ENCODE measurements at regions of chr10 and their contacts with region 1.

Region 1: DNA sequence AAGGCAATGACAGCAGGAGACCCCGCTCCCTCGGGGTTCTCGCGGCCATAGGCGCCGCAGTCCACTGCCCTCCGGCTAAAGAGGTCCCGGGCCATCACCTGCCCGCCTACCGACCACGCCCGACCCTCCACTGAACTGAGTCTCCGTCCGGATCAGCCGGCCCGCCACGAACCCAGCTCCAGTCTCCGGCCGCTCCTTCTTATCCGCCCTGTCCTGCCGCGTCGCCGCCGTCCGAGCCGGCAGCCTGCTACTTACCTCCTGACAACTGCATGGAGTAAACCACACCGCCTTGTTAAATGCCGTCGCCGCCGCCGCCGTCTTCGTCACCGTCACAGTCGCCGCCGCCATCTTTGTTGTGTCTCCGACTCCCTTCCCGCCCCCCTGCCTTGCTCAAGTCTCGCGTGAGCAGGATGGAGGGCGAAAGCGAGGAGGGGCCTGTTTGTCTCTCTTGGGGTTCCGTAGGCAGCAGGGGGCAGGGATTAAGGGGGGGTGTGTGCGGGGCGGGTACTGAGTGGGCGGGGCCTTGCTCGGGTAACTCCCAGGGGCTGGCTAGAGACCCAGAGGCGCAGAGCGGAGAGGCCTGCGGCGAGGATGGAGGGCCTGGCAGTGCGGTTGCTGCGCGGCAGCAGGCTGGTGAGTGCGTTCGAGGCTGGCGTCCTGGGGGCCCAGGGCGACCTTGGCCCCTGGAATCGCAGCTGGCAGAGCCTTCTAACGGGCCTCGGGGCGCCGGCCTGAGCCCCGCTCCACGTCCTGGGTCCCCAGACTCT is at the starts of genes ACADSB and IKZF5:
- DNase-seq: peak; percentile 97
- H3K4me3 ChIP-seq: peak within 1 kb of the TSS; percentile 80 to 93 (median 82)
- H3K27ac ChIP-seq: peak within 1 kb of the TSS; percentile 63
- H3K4me1 ChIP-seq: peaks cover 21% of the 10 kb centered on the region
- H3K27me3 ChIP-seq: no peaks in the 10 kb centered on the region
- CTCF ChIP-seq: no peak
- POLR2A ChIP-seq: peak; percentile 80
- total RNA-seq, gene ACADSB: 10.8 and 15.2 TPM in 2 replicates
- total RNA-seq, gene IKZF5: 10.0 and 10.3 TPM in 2 replicates

Region 2: GRCh38 chr10:122854648-122855047 is 154.0 kb before region 1 on chr10:
- CTCF ChIA-PET with region 1: interaction called, 3 read pairs
- POLR2A ChIA-PET with region 1: no interaction called
- dilution Hi-C with region 1: no loop called
- intact Hi-C with region 1: loop called (anchors 2 kb)
- DNase-seq: peak; percentile 54
- H3K4me3 ChIP-seq: no peak overlapping the region
- H3K27ac ChIP-seq: peak overlapping the region; percentile 73
- H3K4me1 ChIP-seq: peaks cover 61% of the 10 kb centered on the region
- H3K27me3 ChIP-seq: no peaks in the 10 kb centered on the region
- CTCF ChIP-seq: no peak
- POLR2A ChIP-seq: no peak

Region 3: DNA sequence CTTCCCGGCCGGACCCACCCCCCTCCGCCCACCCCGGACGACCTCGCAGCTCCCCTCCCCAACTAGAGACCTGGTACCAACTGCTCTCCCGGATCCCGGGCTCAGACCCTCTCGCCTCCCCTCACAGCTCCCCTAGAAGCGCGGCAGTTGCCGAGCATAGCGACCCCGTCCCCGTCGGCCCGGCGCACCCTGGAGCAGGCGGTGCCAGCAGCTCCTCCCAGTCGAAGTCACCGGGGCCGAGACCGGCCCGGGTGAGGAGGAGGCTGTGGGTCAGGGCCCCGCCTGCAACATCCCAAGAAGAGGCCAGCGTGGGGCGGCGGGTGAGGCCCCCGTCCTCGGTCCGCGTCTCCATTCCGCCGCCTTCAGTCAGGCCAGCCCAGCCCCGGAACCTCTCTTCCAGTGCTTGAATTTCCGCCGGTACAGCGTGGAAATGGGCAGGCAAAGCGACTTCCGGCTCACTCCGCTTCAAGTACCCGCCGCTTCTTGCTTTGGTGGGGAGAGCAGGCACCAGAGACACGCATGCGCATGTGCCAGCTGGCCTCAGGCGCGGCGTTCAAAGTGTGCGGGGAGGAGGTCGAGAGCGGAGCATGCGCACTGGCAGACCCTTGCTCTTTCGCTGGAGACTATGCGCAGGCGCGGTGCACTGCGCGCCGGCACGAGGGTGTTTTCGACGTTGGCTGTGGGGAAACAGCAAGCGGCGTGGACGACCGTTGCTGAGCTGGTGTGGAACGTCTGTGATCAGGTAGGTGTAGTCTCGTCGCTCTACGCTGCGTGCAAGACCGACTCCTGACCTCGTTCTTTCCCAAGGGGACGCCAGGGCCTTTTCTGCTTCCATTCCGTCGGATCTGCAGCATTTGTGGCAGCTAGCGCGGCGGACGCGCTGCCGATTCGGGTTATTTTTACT is 54.5 kb before region 1 on chr10 and contains the start of gene C10orf88:
- CTCF ChIA-PET with region 1: no interaction called
- POLR2A ChIA-PET with region 1: no interaction called
- dilution Hi-C with region 1: no loop called
- intact Hi-C with region 1: loop called (anchors 1 kb)
- DNase-seq: peak; percentile 99
- H3K4me3 ChIP-seq: peak within 1 kb of the TSS; percentile 47 to 78 (median 74)
- H3K27ac ChIP-seq: peak within 1 kb of the TSS; percentile 36
- H3K4me1 ChIP-seq: peaks cover 14% of the 10 kb centered on the region
- H3K27me3 ChIP-seq: no peaks in the 10 kb centered on the region
- CTCF ChIP-seq: no peak
- POLR2A ChIP-seq: peak; percentile 66
- total RNA-seq, gene C10orf88: 10.6 and 13.2 TPM in 2 replicates

Region 4: GRCh38 chr10:123021517-123021916 is 12.9 kb after region 1 on chr10:
- CTCF ChIA-PET with region 1: interaction called, 35 read pairs
- POLR2A ChIA-PET with region 1: no interaction called
- dilution Hi-C with region 1: no loop called
- intact Hi-C with region 1: loop called (anchors 1 kb)
- DNase-seq: peak; percentile 20
- H3K4me3 ChIP-seq: no peak overlapping the region
- H3K27ac ChIP-seq: no peak overlapping the region
- H3K4me1 ChIP-seq: no peaks in the 10 kb centered on the region
- H3K27me3 ChIP-seq: no peaks in the 10 kb centered on the region
- CTCF ChIP-seq: peak; percentile 15 to 41
- POLR2A ChIP-seq: no peak

Region 5: DNA sequence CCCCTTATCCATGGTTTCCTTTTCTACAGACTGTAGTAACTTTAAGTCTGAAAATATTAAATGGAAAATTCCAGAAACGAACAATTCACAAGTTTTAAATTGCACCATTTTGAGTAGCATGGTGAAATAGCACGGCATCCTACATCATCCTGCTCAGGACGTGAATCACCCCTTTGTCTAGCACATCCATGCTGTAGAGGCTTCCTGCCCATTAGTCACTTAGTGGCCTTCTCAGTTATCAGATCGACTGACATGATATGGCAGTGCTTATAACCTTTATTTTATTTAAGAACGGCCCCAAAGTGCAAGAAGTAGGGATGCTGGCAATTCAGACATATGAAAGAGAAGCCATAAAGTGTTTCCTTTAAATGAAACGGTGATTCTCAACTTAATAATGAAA is 800.3 kb after region 1 on chr10:
- CTCF ChIA-PET with region 1: no interaction called
- POLR2A ChIA-PET with region 1: no interaction called
- dilution Hi-C with region 1: no loop called
- intact Hi-C with region 1: loop called (anchors 1 kb)
- DNase-seq: peak; percentile 92
- H3K4me3 ChIP-seq: no peak overlapping the region
- H3K27ac ChIP-seq: peak overlapping the region; percentile 89
- H3K4me1 ChIP-seq: peaks cover 32% of the 10 kb centered on the region
- H3K27me3 ChIP-seq: no peaks in the 10 kb centered on the region
- CTCF ChIP-seq: no peak
- POLR2A ChIP-seq: no peak

Region 6: GRCh38 chr10:124043310-124044142 is 1034.9 kb after region 1 on chr10:
- CTCF ChIA-PET with region 1: no interaction called
- POLR2A ChIA-PET with region 1: no interaction called
- dilution Hi-C with region 1: no loop called
- intact Hi-C with region 1: no loop called
- DNase-seq: no peak
- H3K4me3 ChIP-seq: no peak overlapping the region
- H3K27ac ChIP-seq: no peak overlapping the region
- H3K4me1 ChIP-seq: peaks cover 4% of the 10 kb centered on the region
- H3K27me3 ChIP-seq: peaks cover 0 to 2% of the 10 kb centered on the region in 2 experiments
- CTCF ChIP-seq: no peak
- POLR2A ChIP-seq: no peak